AG04449 (cell line): ENCODE measurements at regions of chr20 and their contacts with region 1.

Region 1: DNA sequence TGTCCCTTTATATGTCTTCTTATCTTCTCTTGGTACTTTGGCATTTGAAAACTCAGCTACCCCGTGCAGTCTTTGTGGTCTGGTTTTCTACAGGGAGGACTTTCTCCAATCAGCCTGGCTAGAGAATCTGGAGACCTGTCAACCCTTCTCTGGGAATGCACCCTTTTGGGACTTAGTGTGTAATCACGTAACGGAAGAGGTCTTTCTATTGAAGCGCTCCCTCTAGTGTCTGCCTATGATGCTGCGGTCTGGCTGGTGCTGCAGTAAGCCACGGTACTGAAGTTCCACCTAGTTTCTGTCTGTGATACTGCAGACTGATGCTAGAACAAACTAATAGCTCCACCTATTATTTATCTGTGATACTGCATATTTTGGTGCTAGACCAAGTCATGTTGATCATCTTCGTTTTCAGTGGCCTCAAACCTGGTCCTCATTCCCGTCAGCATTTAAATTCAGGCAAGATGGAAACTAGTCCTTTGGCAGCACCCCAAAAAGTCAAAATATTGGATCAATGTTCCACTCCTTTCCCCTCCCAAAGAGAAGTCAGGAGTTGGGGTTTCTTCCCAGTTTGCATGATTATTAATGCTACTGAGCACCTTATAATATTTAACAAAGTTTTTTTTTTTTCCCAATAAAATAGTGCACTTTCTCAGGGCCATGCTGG is 12.5 kb upstream of the SIRPB2 start:
- DNase-seq: peak; percentile 66
- H3K4me3 ChIP-seq: no peak overlapping the region
- CTCF ChIP-seq: peak; percentile 99

Region 2: GRCh38 chr20:1437235-1437904 is 66.3 kb before region 1 on chr20:
- CTCF ChIA-PET with region 1: interaction called, 78 read pairs
- POLR2A ChIA-PET with region 1: no interaction called
- DNase-seq: peak; percentile 38
- H3K4me3 ChIP-seq: no peak overlapping the region
- CTCF ChIP-seq: peak; percentile 84

Region 3: DNA sequence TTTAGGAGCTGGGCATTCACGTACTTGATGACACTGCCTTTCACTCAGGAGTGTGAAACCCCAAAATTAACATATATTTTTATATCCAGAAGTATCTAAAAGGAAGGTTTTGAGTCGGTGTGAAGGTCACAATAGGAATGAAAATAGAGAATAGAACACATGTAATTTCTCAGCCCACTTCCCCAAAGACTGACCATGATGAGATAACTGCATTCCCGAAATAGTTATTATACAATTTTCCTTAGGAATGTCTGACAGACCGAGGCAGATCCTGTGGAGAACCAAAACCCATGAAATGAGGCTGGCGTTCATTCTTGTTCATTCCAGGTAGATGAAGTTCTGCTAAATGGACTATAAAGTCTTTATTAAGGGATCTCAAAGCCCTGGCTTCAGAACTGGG is 47.4 kb before region 1 on chr20:
- CTCF ChIA-PET with region 1: interaction called, 12 read pairs
- POLR2A ChIA-PET with region 1: no interaction called
- DNase-seq: no peak
- H3K4me3 ChIP-seq: no peak overlapping the region
- CTCF ChIP-seq: no peak

Region 4: DNA sequence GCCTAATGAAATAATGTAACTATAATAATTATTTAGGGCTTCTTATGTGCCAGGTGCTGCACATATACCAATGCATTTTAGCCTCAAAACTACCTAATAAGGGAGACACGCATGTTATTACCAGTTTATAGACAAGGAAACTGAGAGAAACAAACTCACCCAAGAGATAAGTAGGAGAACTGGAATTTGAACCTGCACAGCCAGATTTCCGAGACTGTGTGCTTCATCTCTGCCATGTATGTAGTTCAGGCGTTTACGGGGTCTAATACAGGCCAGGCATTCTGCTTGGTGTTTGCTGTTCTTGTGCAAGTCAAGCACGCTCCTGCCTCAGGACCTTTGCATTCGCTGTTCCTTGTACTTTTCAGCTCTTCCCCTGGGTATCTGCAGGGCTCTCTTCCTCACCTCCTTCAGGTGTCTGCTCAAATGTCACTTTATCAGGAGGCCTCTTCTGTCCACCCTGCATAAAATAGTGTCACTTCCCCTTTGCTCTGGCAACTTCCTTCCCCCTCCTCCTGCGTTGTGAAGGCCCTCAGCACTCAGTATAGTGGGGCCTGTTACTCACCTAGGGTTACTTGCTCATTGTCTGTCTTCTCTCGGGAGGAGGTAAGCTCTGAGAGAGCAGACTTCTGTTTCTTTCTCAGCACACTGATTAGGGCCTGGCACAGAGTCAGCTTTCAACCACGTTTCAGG is 31.0 kb before region 1 on chr20:
- CTCF ChIA-PET with region 1: interaction called, 53 read pairs
- POLR2A ChIA-PET with region 1: no interaction called
- DNase-seq: no peak
- H3K4me3 ChIP-seq: no peak overlapping the region
- CTCF ChIP-seq: no peak

Region 5: DNA sequence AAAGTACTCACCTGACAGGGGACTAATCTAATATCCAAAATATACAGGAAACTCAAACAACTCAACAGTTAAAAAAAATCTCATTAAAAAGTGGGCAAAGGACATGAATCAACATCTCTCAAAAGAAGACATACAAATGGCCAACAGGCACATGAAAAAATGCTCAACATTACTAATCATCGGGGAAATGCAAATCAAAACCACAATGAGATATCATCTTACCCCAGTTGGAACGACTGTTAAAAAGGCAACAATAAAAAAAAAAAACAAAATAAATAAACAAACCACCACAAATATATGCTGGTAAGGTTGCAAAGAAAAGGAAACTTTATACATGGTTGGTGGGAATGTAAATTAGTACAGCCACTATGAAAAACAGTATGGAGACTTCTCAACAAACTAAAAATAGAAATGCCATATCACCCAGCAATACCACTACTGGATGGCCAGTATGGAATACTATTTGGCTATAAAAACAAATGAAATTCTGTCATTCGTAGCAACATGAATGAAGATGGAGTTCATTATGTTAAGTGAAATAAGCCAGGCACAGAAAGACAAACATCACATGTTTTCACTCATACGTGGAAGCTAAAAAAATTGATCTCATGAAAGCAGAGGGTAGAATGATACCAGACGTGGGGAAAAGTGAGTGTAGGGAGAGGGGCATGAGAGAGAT is 19.1 kb before region 1 on chr20:
- CTCF ChIA-PET with region 1: interaction called, 46 read pairs
- POLR2A ChIA-PET with region 1: no interaction called
- DNase-seq: no peak
- H3K4me3 ChIP-seq: no peak overlapping the region
- CTCF ChIP-seq: no peak

Region 6: GRCh38 chr20:1513801-1514200 is 10.1 kb after region 1 on chr20:
- CTCF ChIA-PET with region 1: interaction called, 13 read pairs
- POLR2A ChIA-PET with region 1: no interaction called
- DNase-seq: no peak
- H3K4me3 ChIP-seq: no peak overlapping the region
- CTCF ChIP-seq: no peak